Colonic mucosa (tissue), 4 donors: ENCODE measurements at regions of chr14 and their contacts with region 1.

Region 1: GRCh38 chr14:58637391-58638230 is at the start of gene DACT1:
- DNase-seq: peak; percentile 59
- H3K4me3 ChIP-seq: peak within 1 kb of the TSS; percentile 81
- H3K27ac ChIP-seq: peak within 1 kb of the TSS; percentile 77
- H3K4me1 ChIP-seq: no peaks in the 10 kb centered on the region
- H3K27me3 ChIP-seq: peaks cover 16% of the 10 kb centered on the region
- CTCF ChIP-seq: no peak
- total RNA-seq, gene DACT1: 1.5 to 4.9 TPM

Region 2: DNA sequence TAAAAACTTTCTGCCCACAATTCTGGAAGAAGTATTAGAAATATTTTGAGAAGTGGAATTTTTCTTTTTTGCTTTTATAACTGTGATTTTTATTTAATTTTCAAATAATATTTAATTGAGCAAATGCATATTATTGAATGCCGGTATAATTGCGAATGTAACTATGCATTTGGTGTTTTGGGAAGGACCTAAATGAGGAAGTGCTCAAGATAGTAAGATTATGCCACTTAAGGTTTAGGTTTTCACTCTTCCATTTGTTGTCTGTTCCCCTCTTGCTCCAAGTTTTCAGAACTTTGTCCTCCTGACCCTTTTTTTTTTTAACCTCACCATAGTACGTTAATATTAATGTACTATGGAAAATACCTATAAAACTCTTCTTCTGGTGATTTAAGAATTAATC is 124.3 kb before region 1 on chr14:
- intact Hi-C with region 1: no loop called
- DNase-seq: no peak
- H3K4me3 ChIP-seq: no peak overlapping the region
- H3K27ac ChIP-seq: no peak overlapping the region
- H3K4me1 ChIP-seq: no peaks in the 10 kb centered on the region
- H3K27me3 ChIP-seq: no peaks in the 10 kb centered on the region
- CTCF ChIP-seq: no peak

Region 3: DNA sequence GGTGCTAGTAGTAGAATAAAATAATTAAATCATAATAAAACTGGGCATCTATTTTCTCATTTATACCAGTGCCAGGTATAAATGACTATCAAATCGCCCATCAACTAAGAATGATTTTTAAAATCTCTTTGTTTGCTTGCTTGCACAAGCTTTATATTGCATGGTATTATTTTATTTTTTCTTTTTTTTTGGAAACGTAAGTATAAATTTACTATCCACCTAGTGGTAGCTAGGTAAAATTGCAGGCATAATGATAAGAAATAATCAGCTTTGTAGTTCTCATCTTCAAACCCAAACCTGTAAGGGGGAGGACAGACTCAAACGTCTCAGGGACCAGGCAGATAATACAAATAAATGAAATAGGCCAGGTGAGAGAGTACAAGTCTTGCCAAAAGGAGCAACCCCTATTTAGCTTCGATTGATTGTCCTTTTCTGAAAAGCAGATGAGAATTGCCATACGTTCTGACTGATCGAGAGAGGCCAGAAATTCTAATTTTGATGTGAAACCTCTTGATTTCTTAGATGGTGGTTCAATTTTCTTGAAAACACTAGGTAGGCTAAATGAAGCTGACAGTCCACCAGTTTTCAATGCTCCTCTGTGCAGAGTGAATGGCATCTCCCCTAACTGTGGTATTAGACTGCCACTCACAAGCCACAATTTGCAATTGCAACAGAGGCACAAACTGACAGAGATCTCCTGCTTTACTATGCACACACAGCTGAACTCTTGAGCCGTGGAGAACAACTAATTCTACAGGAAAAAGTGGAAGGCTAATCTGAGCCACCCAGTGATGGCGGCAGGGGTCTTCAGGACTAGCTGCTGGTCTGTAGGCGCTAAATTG is 189.5 kb after region 1 on chr14:
- intact Hi-C with region 1: loop called (anchors 10 kb)
- DNase-seq: no peak
- H3K4me3 ChIP-seq: no peak overlapping the region
- H3K27ac ChIP-seq: no peak overlapping the region
- H3K4me1 ChIP-seq: no peaks in the 10 kb centered on the region
- H3K27me3 ChIP-seq: no peaks in the 10 kb centered on the region
- CTCF ChIP-seq: no peak

Region 4: DNA sequence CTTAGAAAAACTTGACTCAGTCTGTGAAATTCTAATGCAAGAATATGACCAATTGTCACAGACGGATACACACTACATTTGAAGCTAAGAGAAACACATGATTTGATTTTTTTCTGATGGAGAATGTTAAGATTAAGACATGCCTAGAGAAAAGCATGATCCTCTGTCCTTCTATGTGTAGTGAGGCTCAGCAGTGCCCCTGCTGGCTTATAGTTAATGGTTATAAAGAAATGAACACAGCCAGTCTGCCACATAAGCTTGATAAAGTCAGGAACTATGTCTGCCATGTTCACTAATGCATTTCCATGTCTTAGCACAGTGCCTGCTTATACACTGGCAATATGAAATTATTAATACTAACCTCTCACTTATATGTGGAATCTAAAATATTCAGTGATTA is 382.8 kb after region 1 on chr14:
- intact Hi-C with region 1: loop called (anchors 5 kb)
- DNase-seq: no peak
- H3K4me3 ChIP-seq: no peak overlapping the region
- H3K27ac ChIP-seq: no peak overlapping the region
- H3K4me1 ChIP-seq: no peaks in the 10 kb centered on the region
- H3K27me3 ChIP-seq: no peaks in the 10 kb centered on the region
- CTCF ChIP-seq: peak; percentile 17